ENCODE measurements at regions of chr5 and their contacts with region 1.

Region 1: GRCh38 chr5:131496400-131497007 is 138.5 kb downstream of the RAPGEF6 start:
- DNase-seq: no peak
- ATAC-seq: no peak
- H3K4me3 ChIP-seq: no peak overlapping the region
- H3K27ac ChIP-seq: no peak overlapping the region
- H3K4me1 ChIP-seq: no peaks in the 10 kb centered on the region; the same call in 1 of the 2 replicates
- H3K27me3 ChIP-seq: no peaks in the 10 kb centered on the region
- CTCF ChIP-seq: no peak
- POLR2A ChIP-seq: no peak
- RAD21 ChIP-seq: no peak

Region 2: DNA sequence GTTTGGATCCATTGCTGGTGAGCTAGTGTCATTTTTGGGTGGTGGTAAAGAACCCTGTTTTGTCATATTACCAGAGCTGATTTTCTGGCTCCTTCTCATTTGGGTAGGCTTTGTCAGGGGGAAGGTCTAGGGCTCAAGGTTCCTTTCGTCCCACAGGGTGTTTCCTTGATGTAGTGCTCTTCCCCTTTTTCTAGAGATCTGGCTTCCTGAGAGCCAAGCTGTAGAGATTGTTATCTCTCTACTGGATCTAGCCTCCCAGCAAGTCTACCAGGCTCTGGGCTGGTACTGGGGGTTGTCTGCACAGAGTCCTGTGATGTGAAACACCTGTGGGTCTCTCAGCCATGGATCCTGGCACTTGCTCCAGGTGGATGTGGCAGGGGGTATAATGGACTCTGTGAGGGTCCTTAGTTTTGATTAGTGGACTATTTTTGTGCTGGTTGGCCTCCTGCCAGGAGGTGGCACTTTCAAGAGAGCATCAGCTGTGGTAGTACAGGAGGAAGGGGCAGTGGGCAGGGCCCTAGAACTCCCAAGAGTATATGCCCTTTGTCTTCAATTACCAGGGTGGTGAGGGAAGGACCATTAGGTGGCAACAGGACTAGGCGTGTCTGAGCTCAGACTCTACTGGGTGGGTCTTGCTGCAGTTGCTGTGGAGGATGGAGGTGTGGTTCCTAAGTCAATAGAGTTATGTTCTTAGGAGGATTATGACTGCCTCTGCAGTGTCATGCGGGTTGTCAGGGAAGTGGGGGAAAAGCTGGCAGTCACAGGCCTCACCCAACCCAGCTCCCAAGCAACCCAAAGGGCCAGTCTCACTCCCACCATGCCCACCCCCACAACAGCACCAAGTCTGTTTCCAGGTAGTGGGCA is 477.2 kb before region 1 on chr5:
- CTCF ChIA-PET with region 1: no interaction called
- POLR2A ChIA-PET with region 1: no interaction called
- dilution Hi-C with region 1: no loop called
- in situ Hi-C with region 1: no loop called
- intact Hi-C with region 1: no loop called
- DNase-seq: no peak
- ATAC-seq: no peak
- H3K4me3 ChIP-seq: no peak overlapping the region
- H3K27ac ChIP-seq: no peak overlapping the region
- H3K4me1 ChIP-seq: no peaks in the 10 kb centered on the region
- H3K27me3 ChIP-seq: no peaks in the 10 kb centered on the region
- CTCF ChIP-seq: no peak
- POLR2A ChIP-seq: no peak
- RAD21 ChIP-seq: no peak

Region 3: DNA sequence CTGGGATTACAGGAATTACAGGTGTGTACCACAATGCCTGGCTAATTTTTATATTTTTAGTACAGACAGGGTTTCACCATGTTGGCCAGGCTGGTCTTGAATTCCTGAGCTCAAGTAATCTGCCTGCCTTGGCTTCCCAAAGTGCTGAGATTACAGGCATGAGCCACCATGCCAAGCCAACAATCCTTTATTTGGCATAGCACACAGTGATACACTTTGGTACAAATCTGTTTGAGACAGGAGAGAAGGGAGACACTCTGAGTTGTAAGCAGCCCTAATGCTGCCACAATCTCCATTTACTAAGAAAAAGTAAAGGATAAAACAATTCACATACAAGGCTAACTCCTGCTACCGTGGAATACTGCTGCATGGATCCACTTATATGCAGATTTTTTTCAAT is 39.3 kb before region 1 on chr5:
- CTCF ChIA-PET with region 1: no interaction called
- POLR2A ChIA-PET with region 1: interaction called, 15 read pairs
- dilution Hi-C with region 1: no loop called
- in situ Hi-C with region 1: no loop called
- intact Hi-C with region 1: no loop called
- DNase-seq: no peak
- ATAC-seq: no peak
- H3K4me3 ChIP-seq: no peak overlapping the region
- H3K27ac ChIP-seq: no peak overlapping the region
- H3K4me1 ChIP-seq: no peaks in the 10 kb centered on the region
- H3K27me3 ChIP-seq: no peaks in the 10 kb centered on the region
- CTCF ChIP-seq: no peak
- POLR2A ChIP-seq: no peak
- RAD21 ChIP-seq: no peak

Region 4: DNA sequence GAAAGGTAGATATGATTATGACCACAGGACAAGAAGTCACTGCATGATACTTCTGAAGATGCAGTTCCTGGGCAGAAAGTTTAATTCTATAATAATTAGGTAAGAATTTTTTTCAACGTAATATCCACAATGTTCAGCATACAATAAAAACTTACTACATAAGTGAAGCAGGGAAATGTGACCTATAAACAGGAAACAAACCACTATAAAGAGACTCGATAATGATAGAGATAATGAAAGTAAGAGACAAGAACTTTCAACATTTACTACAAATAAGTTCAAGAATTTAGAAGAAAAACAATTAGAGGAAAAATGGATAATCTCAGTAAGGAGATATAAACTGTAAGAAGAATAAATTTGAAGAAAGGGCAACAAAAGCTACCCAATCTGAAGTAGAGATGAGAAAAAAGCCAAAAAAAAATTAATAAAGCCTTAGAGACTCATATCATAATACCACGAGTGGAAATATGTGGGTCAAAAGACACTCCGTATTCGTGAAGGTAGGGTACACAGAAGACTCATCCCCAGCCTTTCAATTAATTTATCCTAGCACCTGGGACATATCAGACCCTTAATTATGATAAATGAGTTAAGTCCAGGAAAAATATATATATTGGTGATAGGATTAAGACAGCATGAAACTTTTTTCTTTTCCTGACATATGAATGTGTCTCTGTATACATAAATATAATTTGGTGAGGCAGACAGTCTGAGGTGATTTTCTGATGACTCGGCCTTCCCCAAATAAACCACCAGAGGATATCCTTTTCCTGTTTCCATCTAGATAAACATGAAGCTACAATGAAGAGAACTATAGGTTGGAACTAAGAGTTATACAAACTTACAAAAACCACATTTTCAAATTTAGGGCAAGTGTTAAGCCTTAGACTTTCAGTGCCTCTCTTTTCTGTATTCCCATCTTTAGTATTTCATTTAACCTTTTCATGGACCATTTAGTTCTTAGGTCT is 18.1 kb after region 1 on chr5:
- CTCF ChIA-PET with region 1: no interaction called
- POLR2A ChIA-PET with region 1: interaction called, 19 read pairs
- dilution Hi-C with region 1: no loop called
- in situ Hi-C with region 1: no loop called
- intact Hi-C with region 1: no loop called
- DNase-seq: peak; percentile 67
- ATAC-seq: peak; percentile 94
- H3K4me3 ChIP-seq: no peak overlapping the region
- H3K27ac ChIP-seq: no peak overlapping the region
- H3K4me1 ChIP-seq: peaks cover 9% of the 10 kb centered on the region
- H3K27me3 ChIP-seq: no peaks in the 10 kb centered on the region
- CTCF ChIP-seq: peak; percentile 28
- POLR2A ChIP-seq: no peak
- RAD21 ChIP-seq: peak; percentile 12; the same call in 1 of the 2 replicates

Measured in IMR-90 (cell line).